Psoas muscle (tissue), 8 donors: ENCODE measurements at regions of chr1 and their contacts with region 1.

Region 1: GRCh38 chr1:170664828-170665612 is 1.1 kb downstream of the PRRX1 start:
- DNase-seq: peak; percentile 63 to 80
- ATAC-seq: peak; percentile 69 to 77 (median 71)
- H3K4me3 ChIP-seq: peak overlapping the region; percentile 72
- H3K27ac ChIP-seq: peak overlapping the region; percentile 91
- H3K4me1 ChIP-seq: peaks cover 21% of the 10 kb centered on the region
- H3K27me3 ChIP-seq: peaks cover 0 to 2% (median 0%) of the 10 kb centered on the region in 3 donors
- CTCF ChIP-seq: peak; percentile 27

Region 2: GRCh38 chr1:170010443-170010842 is 654.6 kb before region 1 on chr1:
- intact Hi-C with region 1: loop called in 1 of 2 experiments (anchors 10 kb)
- DNase-seq: no peak
- ATAC-seq: no peak
- H3K4me3 ChIP-seq: no peak overlapping the region
- H3K27ac ChIP-seq: no peak overlapping the region
- H3K4me1 ChIP-seq: no peaks in the 10 kb centered on the region
- H3K27me3 ChIP-seq: no peaks in the 10 kb centered on the region
- CTCF ChIP-seq: peak; percentile 47

Region 3: DNA sequence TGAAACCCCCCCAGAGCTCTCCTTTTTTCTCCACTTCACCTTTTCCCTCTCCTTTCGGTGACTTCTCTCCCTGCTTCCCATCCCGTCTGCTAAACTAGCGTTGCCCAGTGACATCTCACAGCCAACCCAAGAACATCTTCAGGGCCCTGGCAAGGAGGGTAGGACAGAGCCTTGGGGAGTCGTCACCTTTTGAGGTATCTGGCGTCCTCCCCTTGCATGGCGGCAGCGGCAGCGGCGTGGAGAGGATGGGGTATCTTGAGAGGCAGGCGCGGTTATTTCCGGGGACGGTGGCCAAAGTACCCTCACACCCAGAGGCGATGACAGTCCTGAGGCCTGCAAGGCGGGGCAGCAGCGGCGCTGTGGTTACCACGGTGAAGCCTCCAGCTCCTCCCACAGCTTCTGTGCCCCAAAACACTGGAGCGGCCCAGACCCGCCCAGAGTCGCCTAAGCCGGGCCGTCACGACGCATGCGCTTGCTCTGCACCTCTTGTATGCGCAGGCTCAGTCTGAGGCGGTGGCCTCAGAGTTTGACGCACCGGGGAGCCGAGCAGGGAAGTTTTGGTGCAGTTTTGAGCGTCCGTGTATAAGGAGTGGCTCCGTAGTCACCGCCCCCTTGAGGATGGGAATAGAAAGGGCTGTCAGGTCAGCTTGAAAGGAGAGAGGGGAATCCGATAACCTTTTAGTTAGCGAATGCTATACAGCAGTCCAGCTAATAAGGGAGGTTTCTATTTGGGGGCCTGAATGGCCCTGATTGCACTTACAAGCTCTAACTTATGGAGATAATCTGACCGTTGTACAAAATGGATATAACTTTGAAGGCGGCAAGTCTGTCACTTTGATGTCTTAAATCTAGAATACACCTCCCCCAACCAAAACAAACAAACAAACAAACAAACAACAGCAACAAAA is 590.5 kb before region 1 on chr1 and contains the start of gene KIFAP3:
- intact Hi-C with region 1: loop called in 1 of 2 experiments (anchors 10 kb)
- DNase-seq: peak; percentile 98 to 99
- ATAC-seq: peak; percentile 99 to 100 (median 100)
- H3K4me3 ChIP-seq: peak within 1 kb of the TSS; percentile 80
- H3K27ac ChIP-seq: peak within 1 kb of the TSS; percentile 77
- H3K4me1 ChIP-seq: peaks cover 6% of the 10 kb centered on the region
- H3K27me3 ChIP-seq: peaks cover 0 to 2% (median 0%) of the 10 kb centered on the region in 3 donors
- CTCF ChIP-seq: peak; percentile 56
- total RNA-seq, gene KIFAP3: 17.0 to 25.7 (median 22.2) TPM

Region 4: DNA sequence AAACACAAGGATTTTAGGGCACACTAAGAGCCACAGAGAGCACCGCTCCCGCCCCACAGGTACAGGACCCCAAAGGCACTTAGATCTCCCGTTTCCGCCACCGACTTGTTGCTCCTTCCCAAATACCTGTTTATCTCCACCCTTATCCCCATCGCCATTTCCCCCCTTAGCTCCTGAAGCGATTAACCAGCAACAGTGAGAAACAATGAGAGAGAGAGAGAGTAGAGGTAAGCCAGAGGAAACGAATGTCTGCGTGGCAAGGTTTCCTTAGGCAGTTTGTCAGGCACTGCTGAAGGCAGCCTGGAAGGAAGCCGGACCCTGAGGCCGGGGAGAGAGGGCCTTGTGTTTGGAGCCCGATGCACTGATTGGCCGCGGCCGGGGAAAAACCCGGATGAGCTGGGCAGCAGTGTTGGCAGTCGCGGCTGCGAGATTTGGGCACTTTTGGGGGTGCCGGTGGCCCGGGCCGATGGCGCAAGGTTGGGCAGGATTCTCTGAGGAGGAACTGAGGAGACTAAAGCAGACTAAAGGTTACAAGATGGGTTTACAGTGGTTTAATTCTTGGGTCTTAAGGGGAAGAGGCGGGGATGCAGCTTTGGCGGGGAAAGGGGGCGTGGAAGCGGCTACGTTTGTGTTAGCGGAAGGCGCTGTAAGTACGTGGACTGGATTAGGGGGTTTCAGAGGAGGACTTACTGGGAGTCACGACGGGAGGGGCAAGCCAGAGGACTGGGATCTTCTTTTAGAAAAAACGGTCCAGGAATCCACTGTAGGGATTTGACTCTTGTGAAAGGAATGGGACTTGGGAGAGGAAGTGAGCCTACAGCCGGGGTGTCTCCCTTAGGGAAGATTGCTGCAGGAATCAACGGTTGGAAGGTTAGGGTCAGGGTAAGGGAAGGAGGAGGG is 133.0 kb before region 1 on chr1 and contains the start of gene GORAB:
- intact Hi-C with region 1: loop called (anchors 2 to 5 kb)
- DNase-seq: peak; percentile 93
- ATAC-seq: peak; percentile 98 to 100 (median 98)
- H3K4me3 ChIP-seq: peak within 1 kb of the TSS; percentile 82
- H3K27ac ChIP-seq: peak within 1 kb of the TSS; percentile 94
- H3K4me1 ChIP-seq: peaks cover 9% of the 10 kb centered on the region
- H3K27me3 ChIP-seq: no peaks in the 10 kb centered on the region
- CTCF ChIP-seq: no peak
- total RNA-seq, gene GORAB: 2.3 to 7.8 (median 3.5) TPM

Region 5: DNA sequence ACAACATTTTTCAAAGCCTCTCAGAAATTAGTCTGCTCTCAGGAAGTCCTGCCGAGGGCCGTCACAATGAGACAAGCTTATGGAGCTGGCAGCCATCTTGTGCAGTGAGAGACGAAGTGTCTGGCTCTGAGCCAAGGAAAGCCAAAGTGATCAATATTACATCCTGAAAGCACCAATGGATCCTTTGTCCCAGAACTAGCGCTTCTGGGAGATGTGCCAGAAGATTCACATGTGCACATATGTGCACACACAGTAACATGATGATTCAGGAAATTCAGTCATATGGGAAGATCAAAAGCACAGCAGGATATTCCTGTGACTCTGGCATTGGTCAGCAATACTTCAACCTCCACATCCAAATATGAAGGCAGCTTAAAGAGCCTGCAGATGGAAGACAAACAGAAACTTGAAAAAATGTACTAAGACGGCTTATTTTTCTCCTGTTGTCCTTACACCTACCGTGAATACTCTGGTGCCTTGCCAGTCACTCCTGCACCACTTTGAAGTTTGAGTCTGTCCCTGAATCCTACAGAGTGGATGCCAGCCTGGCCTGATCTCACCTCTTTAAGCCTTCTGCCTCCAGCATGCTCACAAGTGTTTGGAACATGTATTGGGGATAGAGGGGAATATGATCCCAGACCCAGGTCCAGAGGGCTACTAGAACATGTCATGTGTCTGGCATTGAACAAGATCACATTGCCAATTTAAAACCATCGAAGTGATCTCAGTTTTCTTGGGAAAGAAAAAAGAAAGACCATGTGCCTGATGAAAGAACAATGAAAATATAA is 45.6 kb before region 1 on chr1:
- intact Hi-C with region 1: loop called in 1 of 2 experiments (anchors 1 kb)
- DNase-seq: no peak
- ATAC-seq: peak; percentile 64 to 73 (median 68)
- H3K4me3 ChIP-seq: peak overlapping the region; percentile 40
- H3K27ac ChIP-seq: peak overlapping the region; percentile 75
- H3K4me1 ChIP-seq: peaks cover 30% of the 10 kb centered on the region
- H3K27me3 ChIP-seq: no peaks in the 10 kb centered on the region
- CTCF ChIP-seq: no peak

Region 6: GRCh38 chr1:170765712-170766330 is 100.8 kb after region 1 on chr1:
- intact Hi-C with region 1: loop called (anchors 5 kb)
- DNase-seq: no peak
- ATAC-seq: peak; percentile 68 to 94 (median 76)
- H3K4me3 ChIP-seq: no peak overlapping the region
- H3K27ac ChIP-seq: no peak overlapping the region
- H3K4me1 ChIP-seq: no peaks in the 10 kb centered on the region
- H3K27me3 ChIP-seq: no peaks in the 10 kb centered on the region
- CTCF ChIP-seq: peak; percentile 69